GM12878 (cell line): ENCODE measurements at regions of chr5 and their contacts with region 1.

Region 1: DNA sequence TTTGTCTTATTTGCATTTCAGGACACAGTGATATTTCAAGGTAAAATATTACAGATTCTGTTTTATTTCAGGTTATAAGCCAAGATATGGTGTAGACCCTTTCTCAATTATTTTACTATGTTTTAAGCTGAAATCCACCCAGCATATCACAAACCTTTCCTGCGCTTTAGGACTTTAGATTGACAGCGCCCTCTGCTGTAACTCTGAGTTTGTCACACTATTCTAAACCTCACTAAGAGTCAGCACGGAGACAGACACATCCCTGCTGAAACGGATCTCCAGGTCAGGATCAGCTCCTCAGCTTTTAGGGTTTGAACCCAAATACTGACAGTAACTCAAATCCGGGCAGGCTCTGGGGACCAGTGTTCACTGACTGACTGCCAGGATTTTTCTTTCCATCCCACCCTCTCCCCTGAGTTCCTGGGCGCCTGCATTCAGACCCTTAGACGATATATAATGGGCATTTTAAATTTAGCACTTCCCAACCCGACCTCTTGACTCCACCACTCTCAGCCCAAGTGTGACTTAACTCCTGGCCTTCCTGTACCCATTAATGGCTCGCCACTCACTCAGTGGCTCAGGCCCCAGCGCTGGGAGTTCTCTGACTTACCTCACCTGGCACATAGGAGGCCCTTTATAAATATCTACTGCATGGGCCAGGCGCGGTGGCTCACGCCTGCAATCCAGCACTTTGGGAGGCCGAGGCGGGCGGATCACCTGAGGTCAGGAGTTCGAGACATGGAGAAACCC is 33.5 kb downstream of the TLX3 start:
- DNase-seq: no peak
- ATAC-seq: peak; percentile 89
- H3K4me3 ChIP-seq: no peak overlapping the region
- H3K27ac ChIP-seq: no peak overlapping the region
- H3K4me1 ChIP-seq: no peaks in the 10 kb centered on the region
- H3K27me3 ChIP-seq: peaks cover 0 to 1% of the 10 kb centered on the region in 2 experiments; a peak in 1 of 4 replicates
- CTCF ChIP-seq: peak; percentile 63 to 69 (median 65)
- EP300 ChIP-seq: no peak
- POLR2A ChIP-seq: no peak
- RAD21 ChIP-seq: peak; percentile 70

Region 2: GRCh38 chr5:170740551-170741205 is 601.9 kb before region 1 on chr5:
- CTCF ChIA-PET with region 1: interaction called, 4 read pairs
- POLR2A ChIA-PET with region 1: no interaction called
- RAD21 ChIA-PET with region 1: interaction called, 5 read pairs
- SMC1A ChIA-PET with region 1: no interaction called
- in situ Hi-C with region 1: loop called (anchors 5 kb)
- intact Hi-C with region 1: loop called (anchors 5 kb)
- DNase-seq: no peak
- ATAC-seq: no peak
- H3K4me3 ChIP-seq: no peak overlapping the region
- H3K27ac ChIP-seq: no peak overlapping the region
- H3K4me1 ChIP-seq: no peaks in the 10 kb centered on the region
- H3K27me3 ChIP-seq: peaks cover 0 to 7% of the 10 kb centered on the region in 2 experiments; a peak in 3 of 4 replicates
- CTCF ChIP-seq: no peak
- EP300 ChIP-seq: no peak
- POLR2A ChIP-seq: no peak
- RAD21 ChIP-seq: no peak

Region 3: GRCh38 chr5:170809551-170809950 is 533.0 kb before region 1 on chr5:
- CTCF ChIA-PET with region 1: no interaction called
- POLR2A ChIA-PET with region 1: no interaction called
- RAD21 ChIA-PET with region 1: no interaction called
- SMC1A ChIA-PET with region 1: no interaction called
- in situ Hi-C with region 1: no loop called
- intact Hi-C with region 1: loop called (anchors 5 kb)
- DNase-seq: no peak
- ATAC-seq: peak; percentile 79
- H3K4me3 ChIP-seq: no peak overlapping the region
- H3K27ac ChIP-seq: no peak overlapping the region
- H3K4me1 ChIP-seq: no peaks in the 10 kb centered on the region
- H3K27me3 ChIP-seq: no peaks in the 10 kb centered on the region; a peak in 1 of 4 replicates
- CTCF ChIP-seq: peak; percentile 14 to 55 (median 18); a peak in 3 of 6 replicates
- EP300 ChIP-seq: no peak
- POLR2A ChIP-seq: no peak
- RAD21 ChIP-seq: peak; percentile 40

Region 4: DNA sequence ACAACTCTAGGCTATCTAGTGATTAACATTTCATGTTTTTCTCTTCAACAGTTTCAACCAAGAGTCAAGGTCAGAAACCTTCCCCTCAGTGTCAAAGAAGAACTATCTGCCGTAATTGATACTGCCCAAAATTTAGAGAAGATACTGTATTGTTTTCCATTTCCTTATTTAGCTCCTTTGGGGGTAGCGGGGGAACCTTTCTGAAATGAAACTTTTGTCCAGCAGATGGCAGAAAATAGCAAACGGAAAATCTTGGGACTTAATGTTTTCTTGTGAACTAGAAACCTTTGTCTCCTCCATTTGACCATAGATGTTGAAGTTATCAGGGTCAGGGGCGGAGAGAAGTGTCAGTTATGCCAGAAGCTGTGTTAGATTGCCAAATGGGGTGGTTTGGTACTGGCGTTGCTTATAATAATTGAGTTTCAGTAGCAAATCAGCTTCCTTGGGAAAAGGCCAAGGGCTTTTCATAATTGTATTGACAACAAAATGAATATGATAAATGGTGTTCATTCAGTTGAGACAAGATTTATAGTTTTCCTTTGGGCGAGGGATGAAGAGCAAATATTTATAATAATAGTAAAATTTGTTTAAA is 135.2 kb before region 1 on chr5:
- CTCF ChIA-PET with region 1: interaction called, 21 read pairs
- POLR2A ChIA-PET with region 1: no interaction called
- RAD21 ChIA-PET with region 1: interaction called, 7 read pairs
- SMC1A ChIA-PET with region 1: interaction called, 8 read pairs
- in situ Hi-C with region 1: no loop called
- intact Hi-C with region 1: loop called (anchors 1 kb)
- DNase-seq: no peak
- ATAC-seq: peak; percentile 54
- H3K4me3 ChIP-seq: no peak overlapping the region
- H3K27ac ChIP-seq: no peak overlapping the region
- H3K4me1 ChIP-seq: no peaks in the 10 kb centered on the region
- H3K27me3 ChIP-seq: no peaks in the 10 kb centered on the region
- CTCF ChIP-seq: peak; percentile 26 to 47 (median 43); a peak in 4 of 6 replicates
- EP300 ChIP-seq: no peak
- POLR2A ChIP-seq: no peak
- RAD21 ChIP-seq: peak; percentile 52

Region 5: GRCh38 chr5:171272996-171273970 is 69.3 kb before region 1 on chr5:
- CTCF ChIA-PET with region 1: interaction called, 5 read pairs
- POLR2A ChIA-PET with region 1: no interaction called
- RAD21 ChIA-PET with region 1: interaction called, 3 read pairs
- SMC1A ChIA-PET with region 1: interaction called, 4 read pairs
- in situ Hi-C with region 1: no loop called
- intact Hi-C with region 1: loop called (anchors 1 kb)
- DNase-seq: no peak
- ATAC-seq: peak; percentile 77
- H3K4me3 ChIP-seq: no peak overlapping the region
- H3K27ac ChIP-seq: no peak overlapping the region
- H3K4me1 ChIP-seq: no peaks in the 10 kb centered on the region
- H3K27me3 ChIP-seq: no peaks in the 10 kb centered on the region; a peak in 2 of 4 replicates
- CTCF ChIP-seq: peak; percentile 46 to 56 (median 51); a peak in 5 of 6 replicates
- EP300 ChIP-seq: no peak
- POLR2A ChIP-seq: no peak
- RAD21 ChIP-seq: peak; percentile 44